Left ventricle myocardium inferior (tissue), 1 donor: ENCODE measurements at regions of chr2 and their contacts with region 1.

Region 1: GRCh38 chr2:197168705-197169104 is 141.9 kb downstream of the ANKRD44 start:
- DNase-seq: peak; percentile 46
- H3K4me3 ChIP-seq: no peak overlapping the region
- H3K27ac ChIP-seq: no peak overlapping the region
- H3K4me1 ChIP-seq: peaks cover 26% of the 10 kb centered on the region
- H3K27me3 ChIP-seq: no peaks in the 10 kb centered on the region
- CTCF ChIP-seq: peak; percentile 61

Region 2: GRCh38 chr2:197011799-197012641 is 156.7 kb before region 1 on chr2:
- intact Hi-C with region 1: loop called (anchors 10 kb)
- DNase-seq: no peak
- H3K4me3 ChIP-seq: no peak overlapping the region
- H3K27ac ChIP-seq: no peak overlapping the region
- H3K4me1 ChIP-seq: peaks cover 10% of the 10 kb centered on the region
- H3K27me3 ChIP-seq: no peaks in the 10 kb centered on the region
- CTCF ChIP-seq: peak; percentile 92